Heart left ventricle (tissue), 16 donors: ENCODE measurements at regions of chr19 and their contacts with region 1.

Region 1: GRCh38 chr19:36169084-36169760 is 17.0 kb upstream of the COX7A1 start:
- DNase-seq: peak in 3 of 5 donors; percentile 32 to 69 (median 44)
- ATAC-seq: peak; percentile 40 to 76 (median 60)
- H3K4me3 ChIP-seq: no peak overlapping the region
- H3K27ac ChIP-seq: peak overlapping the region; percentile 19 to 85 (median 68)
- H3K4me1 ChIP-seq: peaks cover 0 to 21% (median 14%) of the 10 kb centered on the region in 12 donors
- H3K27me3 ChIP-seq: no peaks in the 10 kb centered on the region
- CTCF ChIP-seq: no peak
- POLR2A ChIP-seq: no peak

Region 2: DNA sequence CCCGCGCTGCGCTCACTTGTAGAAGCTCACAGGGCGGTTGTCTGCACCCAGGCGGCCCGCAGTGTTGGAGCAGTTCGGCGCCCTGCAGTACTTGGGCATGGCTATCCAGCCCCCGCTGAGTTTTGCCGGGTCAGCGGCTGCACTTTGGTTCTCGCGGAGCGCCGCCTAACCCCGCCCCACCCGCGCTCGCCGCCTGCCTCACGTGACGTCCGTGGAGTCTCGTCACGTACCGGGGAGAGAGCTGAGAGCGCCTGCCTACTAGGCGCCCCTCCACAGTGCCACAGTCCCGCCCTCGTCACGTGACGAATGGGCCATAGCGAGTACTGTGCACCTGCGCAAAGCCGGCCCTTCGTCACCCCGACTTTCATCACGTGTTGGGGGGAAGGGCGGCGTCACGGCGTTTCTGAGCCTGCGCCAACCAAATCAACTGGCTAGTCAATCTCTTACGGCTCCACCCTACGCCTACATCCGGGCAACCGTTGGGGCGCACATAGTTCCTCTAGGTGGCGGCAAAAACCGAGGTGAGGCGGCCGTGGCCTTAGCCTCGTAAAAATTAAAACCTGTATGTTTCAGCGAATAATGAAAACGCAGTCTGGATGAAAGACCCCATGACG is 115.0 kb before region 1 on chr19 and contains the start of gene THAP8:
- intact Hi-C with region 1: loop called in 4 of 10 experiments (anchors 5 to 10 kb)
- DNase-seq: peak; percentile 100
- ATAC-seq: peak; percentile 96 to 98 (median 97)
- H3K4me3 ChIP-seq: peak within 1 kb of the TSS; percentile 16 to 80 (median 68)
- H3K27ac ChIP-seq: peak within 1 kb of the TSS; percentile 70 to 98 (median 92)
- H3K4me1 ChIP-seq: peaks cover 0 to 19% (median 13%) of the 10 kb centered on the region in 12 donors
- H3K27me3 ChIP-seq: no peaks in the 10 kb centered on the region
- CTCF ChIP-seq: peak in 11 of 12 donors; percentile 36 to 88 (median 63)
- POLR2A ChIP-seq: peak in 1 of 2 donors; percentile 73
- total RNA-seq, gene THAP8: 2.3 to 6.0 (median 4.3) TPM

Region 3: DNA sequence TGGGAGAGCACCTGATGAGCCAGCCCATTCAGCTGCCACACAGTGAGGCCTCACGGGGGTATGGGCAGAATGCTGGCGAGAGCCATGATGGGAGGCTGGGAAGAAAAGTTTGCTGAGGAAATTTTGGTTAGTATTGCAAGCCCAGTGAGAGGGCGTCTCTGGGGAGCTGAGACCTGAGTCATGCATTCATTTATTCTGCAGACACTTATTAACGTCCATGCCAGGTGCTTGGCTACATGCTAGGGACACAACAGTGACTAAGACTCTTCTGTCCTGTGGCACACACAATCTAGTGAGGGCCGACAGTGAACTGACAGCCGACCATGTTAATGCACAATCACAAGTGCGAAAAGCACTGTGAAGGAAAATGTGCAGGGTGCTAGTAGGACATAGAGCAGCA is 87.3 kb before region 1 on chr19:
- intact Hi-C with region 1: no loop called
- DNase-seq: no peak
- ATAC-seq: no peak
- H3K4me3 ChIP-seq: no peak overlapping the region
- H3K27ac ChIP-seq: no peak overlapping the region
- H3K4me1 ChIP-seq: peaks cover 0 to 3% (median 0%) of the 10 kb centered on the region in 12 donors
- H3K27me3 ChIP-seq: no peaks in the 10 kb centered on the region
- CTCF ChIP-seq: no peak
- POLR2A ChIP-seq: no peak

Region 4: DNA sequence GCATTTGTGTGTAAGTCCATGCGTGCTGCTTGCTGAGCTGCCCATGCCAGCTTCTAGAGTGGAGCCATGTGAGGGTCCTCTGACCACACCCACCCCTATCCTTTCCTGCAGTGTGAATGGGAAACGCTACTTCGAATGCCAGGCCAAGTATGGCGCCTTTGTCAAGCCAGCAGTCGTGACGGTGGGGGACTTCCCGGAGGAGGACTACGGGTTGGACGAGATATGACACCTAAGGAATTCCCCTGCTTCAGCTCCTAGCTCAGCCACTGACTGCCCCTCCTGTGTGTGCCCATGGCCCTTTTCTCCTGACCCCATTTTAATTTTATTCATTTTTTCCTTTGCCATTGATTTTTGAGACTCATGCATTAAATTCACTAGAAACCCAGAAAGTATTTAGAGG is 43.7 kb before region 1 on chr19:
- intact Hi-C with region 1: loop called (anchors 1 to 2 kb)
- DNase-seq: no peak
- ATAC-seq: no peak
- H3K4me3 ChIP-seq: no peak overlapping the region
- H3K27ac ChIP-seq: no peak overlapping the region
- H3K4me1 ChIP-seq: peaks cover 0 to 24% (median 11%) of the 10 kb centered on the region in 12 donors
- H3K27me3 ChIP-seq: no peaks in the 10 kb centered on the region
- CTCF ChIP-seq: no peak
- POLR2A ChIP-seq: no peak

Region 5: DNA sequence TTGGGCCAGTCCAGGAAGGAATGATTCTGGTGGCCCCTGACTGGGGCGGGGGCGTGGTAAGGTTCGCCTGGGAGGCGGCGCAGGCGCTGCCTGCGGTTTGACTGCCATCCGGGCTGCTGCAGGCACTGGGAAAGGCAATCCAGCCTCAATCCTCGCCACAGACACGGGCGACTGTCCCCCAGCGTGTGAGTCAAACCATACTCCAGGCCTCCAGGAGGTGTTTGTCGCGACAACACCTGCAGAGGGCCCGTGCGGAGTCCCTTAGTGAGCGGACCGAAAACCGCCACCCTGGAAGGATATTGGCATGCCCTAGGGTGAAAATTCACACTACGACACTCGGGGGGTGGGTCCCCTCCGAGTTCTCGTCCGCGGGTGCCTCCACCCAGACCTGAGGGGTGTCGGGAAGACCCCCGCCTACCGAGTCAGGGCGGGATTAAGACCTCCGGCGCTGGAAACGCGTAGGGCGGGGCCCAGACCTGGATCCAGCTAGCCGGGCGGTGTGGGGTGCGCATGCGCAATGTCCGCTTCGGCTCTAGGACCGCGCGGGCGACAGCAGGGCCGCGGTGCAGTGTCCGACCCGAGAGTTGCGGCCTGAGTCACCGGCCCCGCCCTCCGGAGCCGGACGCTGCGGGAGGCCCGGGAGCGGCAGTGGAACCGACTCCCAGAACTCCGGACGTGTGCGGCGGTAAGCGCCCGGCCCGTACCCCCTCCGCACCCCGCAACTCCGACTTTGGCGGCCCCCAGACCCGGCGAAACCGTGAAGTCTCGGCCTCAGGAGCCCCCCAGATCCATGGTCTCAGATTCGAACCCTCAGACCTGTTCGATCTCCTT is 29.5 kb before region 1 on chr19 and contains the start of gene CAPNS1:
- intact Hi-C with region 1: loop called in 1 of 10 experiments (anchors 1 kb)
- DNase-seq: peak; percentile 98 to 99 (median 99)
- ATAC-seq: peak; percentile 91 to 93 (median 92)
- H3K4me3 ChIP-seq: peak within 1 kb of the TSS; percentile 80 to 100 (median 95)
- H3K27ac ChIP-seq: peak within 1 kb of the TSS; percentile 93 to 100 (median 99)
- H3K4me1 ChIP-seq: peaks cover 0 to 30% (median 16%) of the 10 kb centered on the region in 12 donors
- H3K27me3 ChIP-seq: no peaks in the 10 kb centered on the region
- CTCF ChIP-seq: peak in 5 of 12 donors; percentile 14 to 19 (median 17)
- POLR2A ChIP-seq: peak; percentile 95 to 97
- total RNA-seq, gene CAPNS1: 272 to 1,054 (median 860) TPM

Region 6: GRCh38 chr19:36225219-36225892 is 56.1 kb after region 1 on chr19:
- intact Hi-C with region 1: no loop called
- DNase-seq: no peak
- ATAC-seq: no peak
- H3K4me3 ChIP-seq: no peak overlapping the region
- H3K27ac ChIP-seq: peak overlapping the region in 2 of 12 donors; percentile 6 to 64
- H3K4me1 ChIP-seq: peaks cover 0 to 27% (median 19%) of the 10 kb centered on the region in 12 donors
- H3K27me3 ChIP-seq: no peaks in the 10 kb centered on the region
- CTCF ChIP-seq: no peak
- POLR2A ChIP-seq: no peak

Region 7: DNA sequence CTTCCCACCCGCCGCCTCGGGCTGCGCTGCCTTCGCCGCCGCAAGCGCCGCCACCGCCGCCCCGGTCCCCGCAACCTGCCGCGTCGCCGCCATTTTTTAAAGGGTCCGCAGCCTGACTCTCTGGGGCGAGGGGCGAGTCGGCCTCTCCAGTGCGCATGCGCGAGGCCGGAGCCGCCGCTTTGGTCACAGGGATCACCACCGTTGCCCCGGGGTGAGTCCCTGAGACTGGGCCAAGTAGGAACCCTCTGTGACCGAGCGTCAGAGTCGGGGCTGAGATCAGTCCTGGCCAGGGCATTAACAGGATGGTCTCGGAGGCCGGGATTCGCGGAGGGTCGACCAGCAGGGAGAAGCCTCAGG is 88.3 kb after region 1 on chr19:
- intact Hi-C with region 1: no loop called
- DNase-seq: peak in 4 of 5 donors; percentile 31 to 74 (median 61)
- ATAC-seq: peak in 3 of 4 donors; percentile 74 to 94 (median 87)
- H3K4me3 ChIP-seq: peak overlapping the region; percentile 39 to 83 (median 66)
- H3K27ac ChIP-seq: peak overlapping the region in 3 of 12 donors; percentile 32 to 52 (median 49)
- H3K4me1 ChIP-seq: peaks cover 0 to 10% (median 0%) of the 10 kb centered on the region in 12 donors
- H3K27me3 ChIP-seq: no peaks in the 10 kb centered on the region
- CTCF ChIP-seq: no peak
- POLR2A ChIP-seq: no peak